HEK293T (cell line): ENCODE measurements at regions of chr19 and their contacts with region 1.

Region 1: GRCh38 chr19:18557474-18558201 is at the start of gene KXD1:
- DNase-seq: peak; percentile 95

Region 2: DNA sequence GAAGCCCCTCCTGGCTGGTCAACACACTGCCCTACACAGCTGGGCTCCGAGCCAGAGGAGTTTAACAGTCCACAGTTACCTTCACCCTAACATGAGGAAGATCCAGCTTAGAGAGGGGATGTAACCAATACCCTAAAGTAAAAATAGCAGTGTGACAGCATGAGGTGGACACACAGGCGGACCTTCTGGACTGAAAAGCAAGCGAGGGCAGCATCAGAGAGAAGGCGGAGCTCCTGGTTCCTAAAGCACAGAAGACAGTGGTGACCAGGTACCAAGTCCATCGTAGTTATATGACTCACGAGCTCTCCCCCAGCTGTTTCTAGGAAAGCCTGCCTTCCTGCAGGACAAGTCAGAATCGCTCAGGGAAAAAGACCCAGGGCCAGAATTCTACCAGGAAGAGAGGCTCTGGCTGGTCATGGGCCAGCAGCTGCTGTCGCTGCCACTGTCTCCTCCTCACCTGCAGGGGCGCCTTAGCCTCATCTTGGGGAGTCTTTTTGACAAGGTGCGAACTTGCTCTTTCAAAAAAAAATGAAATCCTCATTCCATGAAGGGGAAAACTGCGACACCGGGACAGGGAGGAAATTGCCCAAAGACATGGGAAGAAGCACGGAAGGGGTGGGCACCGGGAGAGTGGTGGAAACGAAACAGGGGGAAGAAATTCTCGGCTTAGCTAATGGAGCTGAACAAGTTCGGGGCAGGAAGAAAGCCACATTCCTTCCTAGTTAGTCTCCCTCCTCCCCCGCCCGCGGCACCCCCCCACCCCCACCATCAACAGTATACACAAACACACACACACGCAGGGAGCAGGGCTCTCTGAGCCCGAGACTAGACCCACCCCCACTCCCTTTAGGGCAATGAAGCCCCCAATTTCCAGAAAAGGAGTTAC is 37.4 kb before region 1 on chr19:
- CTCF ChIA-PET with region 1: no interaction called
- POLR2A ChIA-PET with region 1: interaction called, 11 read pairs
- DNase-seq: peak; percentile 53

Region 3: DNA sequence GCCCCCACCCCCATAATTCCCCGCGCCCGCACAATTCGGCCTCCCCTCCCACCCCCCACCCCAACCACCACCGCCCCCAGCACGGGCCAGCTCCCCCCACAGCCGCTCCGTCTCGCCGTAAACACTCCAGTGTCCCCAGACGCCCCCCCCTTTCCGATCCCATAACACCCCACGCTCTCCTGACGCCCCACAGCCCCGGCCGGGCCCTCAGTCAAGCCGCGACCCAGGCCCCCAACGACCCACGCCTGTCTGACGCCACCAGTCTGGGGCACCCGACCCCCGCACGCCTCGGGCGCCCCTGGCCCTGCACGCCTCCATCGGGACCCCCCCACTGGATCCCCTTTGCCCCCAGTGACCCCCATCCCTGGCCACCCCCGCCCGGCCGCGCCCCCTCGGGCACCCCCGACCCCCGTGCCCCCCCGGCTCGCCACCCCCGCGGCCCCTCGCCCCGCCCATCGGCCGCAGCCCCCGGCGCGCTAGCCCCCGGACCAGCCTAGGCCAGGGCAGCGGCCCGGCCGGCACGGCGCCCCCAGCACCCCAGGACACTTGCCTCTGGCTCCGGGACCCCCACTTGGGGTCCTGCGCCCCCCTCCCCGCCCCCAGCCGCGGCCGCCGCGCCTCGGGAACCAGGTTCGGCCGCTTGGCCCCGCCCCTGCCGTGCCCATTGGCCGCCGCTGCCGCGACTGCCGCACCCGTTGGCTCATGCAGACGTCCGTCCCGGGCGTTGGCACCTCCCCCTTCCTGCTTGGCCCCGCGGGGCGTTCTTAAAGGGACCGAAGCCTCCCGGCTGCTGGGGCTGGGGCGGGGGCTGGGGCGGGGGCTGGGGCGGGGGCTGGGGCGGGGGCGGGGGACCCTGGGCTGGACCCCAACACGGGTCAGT is 14.5 kb before region 1 on chr19 and contains the start of gene FKBP8:
- CTCF ChIA-PET with region 1: interaction called, 4 read pairs
- POLR2A ChIA-PET with region 1: interaction called, 18 read pairs
- DNase-seq: peak; percentile 96

Region 4: DNA sequence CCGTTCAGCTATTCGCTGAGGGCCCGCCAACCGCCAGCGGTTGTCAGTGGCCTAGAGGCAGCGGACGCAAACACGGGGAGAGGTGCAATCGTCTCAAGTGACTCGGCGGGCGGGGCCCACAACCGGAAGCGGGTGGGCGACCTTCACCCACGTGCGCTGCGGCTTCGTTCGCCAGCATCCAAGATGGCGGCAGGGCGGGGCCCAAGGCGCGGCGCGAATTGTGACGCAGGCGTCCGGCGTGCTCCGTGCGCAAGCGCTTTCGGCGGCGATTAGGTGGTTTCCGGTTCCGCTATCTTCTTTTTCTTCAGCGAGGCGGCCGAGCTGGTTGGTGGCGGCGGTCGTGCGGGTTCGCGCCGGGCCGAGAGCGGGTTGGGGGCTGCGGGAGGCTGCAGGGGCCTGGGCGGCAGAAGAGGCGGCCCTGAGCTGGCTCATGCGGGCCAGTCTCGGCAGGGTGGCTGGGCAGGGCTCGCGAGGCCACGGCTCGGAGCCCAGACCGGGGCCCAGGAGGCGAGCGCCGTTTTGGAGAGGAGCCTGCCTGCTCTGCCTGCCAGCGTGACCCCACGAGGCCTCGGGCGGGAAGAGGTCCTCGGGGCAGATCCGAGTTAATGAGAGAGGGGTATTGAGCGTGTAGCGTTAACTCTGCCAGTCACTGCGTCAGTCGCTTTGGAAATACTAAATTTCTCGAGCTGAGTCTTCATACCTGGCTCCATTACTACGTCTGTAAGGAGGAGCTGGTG is 14.1 kb after region 1 on chr19 and contains the start of gene UBA52:
- CTCF ChIA-PET with region 1: no interaction called
- POLR2A ChIA-PET with region 1: interaction called, 32 read pairs
- DNase-seq: peak; percentile 95

Region 5: GRCh38 chr19:18588611-18589379 is 31.2 kb after region 1 on chr19 and contains the start of gene REX1BD:
- CTCF ChIA-PET with region 1: interaction called, 4 read pairs
- POLR2A ChIA-PET with region 1: interaction called, 26 read pairs
- DNase-seq: peak; percentile 77